ENCODE measurements at regions of chr1 and their contacts with region 1.

Region 1: GRCh38 chr1:235971571-235972310 is 93.1 kb downstream of the NID1 start:
- DNase-seq: peak; percentile 99 to 100 (median 99)
- H3K4me3 ChIP-seq: peak overlapping the region; percentile 35 to 72 (median 53)
- H3K4me3 Mint-ChIP-seq: peak overlapping the region; percentile 85 to 95
- H3K27ac ChIP-seq: peak overlapping the region; percentile 95 to 97
- H3K27ac Mint-ChIP-seq: peak overlapping the region; percentile 95 to 99 (median 98)
- H3K4me1 ChIP-seq: peaks cover 29 to 48% of the 10 kb centered on the region in 2 donors
- H3K4me1 Mint-ChIP-seq: peaks cover 35% of the 10 kb centered on the region
- H3K27me3 ChIP-seq: no peaks in the 10 kb centered on the region
- H3K27me3 Mint-ChIP-seq: peaks cover 0 to 3% (median 0%) of the 10 kb centered on the region in 3 donors
- CTCF ChIP-seq: peak; percentile 88

Region 2: DNA sequence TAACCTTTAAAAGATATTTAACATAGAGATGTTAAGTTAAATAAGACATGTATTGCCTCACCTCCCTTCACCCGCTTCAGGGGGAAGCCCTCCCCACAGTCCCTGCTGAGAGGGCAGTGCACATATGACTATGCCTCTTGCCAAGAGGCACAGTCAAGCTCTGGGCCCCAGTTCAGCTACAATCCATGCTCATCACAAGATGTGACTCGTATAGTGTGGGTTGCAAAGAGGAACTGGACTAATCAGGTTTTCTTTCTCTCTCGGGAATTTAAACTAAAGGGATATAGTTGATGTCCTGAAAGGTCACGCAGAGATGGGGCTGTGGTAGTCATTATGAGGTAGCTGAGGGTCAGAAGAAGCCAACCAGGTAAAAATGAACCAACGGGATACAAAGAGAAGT is 140.6 kb before region 1 on chr1:
- intact Hi-C with region 1: loop called (anchors 5 to 10 kb)
- DNase-seq: peak; percentile 70 to 89 (median 74)
- H3K4me3 ChIP-seq: no peak overlapping the region
- H3K4me3 Mint-ChIP-seq: no peak overlapping the region
- H3K27ac ChIP-seq: peak overlapping the region; percentile 9 to 71
- H3K27ac Mint-ChIP-seq: peak overlapping the region; percentile 73 to 97 (median 95)
- H3K4me1 ChIP-seq: peaks cover 17 to 18% of the 10 kb centered on the region in 2 donors
- H3K4me1 Mint-ChIP-seq: peaks cover 26% of the 10 kb centered on the region
- H3K27me3 ChIP-seq: no peaks in the 10 kb centered on the region
- H3K27me3 Mint-ChIP-seq: no peaks in the 10 kb centered on the region
- CTCF ChIP-seq: no peak

Region 3: DNA sequence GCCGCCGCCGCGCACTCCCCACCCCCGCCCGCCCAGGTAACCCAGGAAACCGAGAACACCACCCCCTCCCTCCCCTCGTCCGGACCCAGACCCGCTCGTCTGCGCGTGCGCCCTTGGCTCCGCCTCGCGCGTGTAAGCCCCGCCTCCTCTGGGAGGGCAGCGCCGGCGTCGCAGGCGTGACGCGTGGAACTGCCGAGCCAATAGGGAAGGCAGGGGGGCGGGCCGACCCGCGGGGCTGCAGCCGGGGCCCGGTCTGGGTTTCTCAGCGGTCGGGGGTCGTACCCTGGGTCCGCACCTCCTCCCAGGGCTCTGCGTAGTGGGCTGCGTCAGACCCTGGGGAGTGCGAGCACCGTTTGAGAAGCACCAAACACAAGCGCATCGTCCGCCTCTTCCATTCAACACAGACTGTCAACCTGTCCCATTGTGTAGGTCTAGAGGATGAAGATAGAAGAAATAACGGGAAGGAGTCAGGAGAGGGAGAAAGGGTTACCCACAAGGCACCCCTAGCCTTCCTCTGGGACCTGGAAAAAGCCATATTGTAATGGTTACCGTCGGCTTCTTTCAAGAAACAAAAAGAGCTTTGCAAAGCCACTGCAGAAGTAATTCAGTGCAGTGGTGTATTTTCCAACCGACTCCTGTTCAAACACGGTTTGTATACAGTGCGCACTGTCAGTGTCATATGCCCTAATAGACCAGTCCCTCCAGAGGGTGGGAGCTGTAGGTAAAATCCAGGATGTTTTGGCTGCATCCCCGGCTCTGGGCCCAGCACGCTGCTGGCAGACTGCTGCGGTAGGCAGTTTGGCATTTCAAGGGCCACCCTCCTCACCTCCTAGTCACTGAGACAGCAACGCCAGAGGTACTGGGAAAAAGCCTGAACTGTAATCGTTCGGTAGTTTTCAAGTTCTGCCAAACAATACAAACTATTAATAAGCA is 104.6 kb before region 1 on chr1:
- intact Hi-C with region 1: loop called (anchors 2 to 5 kb)
- DNase-seq: peak; percentile 87 to 96 (median 92)
- H3K4me3 ChIP-seq: peak overlapping the region; percentile 86 to 99 (median 93)
- H3K4me3 Mint-ChIP-seq: peak overlapping the region; percentile 83 to 85
- H3K27ac ChIP-seq: peak overlapping the region; percentile 97 to 98
- H3K27ac Mint-ChIP-seq: peak overlapping the region in 6 of 7 donors; percentile 94 to 98 (median 97)
- H3K4me1 ChIP-seq: peaks cover 41 to 46% of the 10 kb centered on the region in 2 donors
- H3K4me1 Mint-ChIP-seq: peaks cover 41% of the 10 kb centered on the region
- H3K27me3 ChIP-seq: no peaks in the 10 kb centered on the region
- H3K27me3 Mint-ChIP-seq: no peaks in the 10 kb centered on the region
- CTCF ChIP-seq: no peak

Region 4: GRCh38 chr1:235910357-235911299 is 61.1 kb before region 1 on chr1:
- intact Hi-C with region 1: loop called in 1 of 2 experiments (anchors 5 kb)
- DNase-seq: peak; percentile 56 to 84 (median 72)
- H3K4me3 ChIP-seq: no peak overlapping the region
- H3K4me3 Mint-ChIP-seq: no peak overlapping the region
- H3K27ac ChIP-seq: no peak overlapping the region
- H3K27ac Mint-ChIP-seq: peak overlapping the region in 2 of 7 donors; percentile 25 to 78
- H3K4me1 ChIP-seq: peaks cover 21 to 32% of the 10 kb centered on the region in 2 donors
- H3K4me1 Mint-ChIP-seq: peaks cover 41% of the 10 kb centered on the region
- H3K27me3 ChIP-seq: no peaks in the 10 kb centered on the region
- H3K27me3 Mint-ChIP-seq: peaks cover 0 to 3% (median 2%) of the 10 kb centered on the region in 3 donors
- CTCF ChIP-seq: no peak

Region 5: GRCh38 chr1:235946571-235946981 is 25.2 kb before region 1 on chr1:
- intact Hi-C with region 1: loop called in 1 of 2 experiments (anchors 2 kb)
- DNase-seq: no peak
- H3K4me3 ChIP-seq: peak overlapping the region in 1 of 3 experiments; percentile 60
- H3K4me3 Mint-ChIP-seq: peak overlapping the region; percentile 62 to 71
- H3K27ac ChIP-seq: peak overlapping the region; percentile 95 to 100
- H3K27ac Mint-ChIP-seq: peak overlapping the region; percentile 97 to 100 (median 99)
- H3K4me1 ChIP-seq: peaks cover 99 to 100% of the 10 kb centered on the region in 2 donors
- H3K4me1 Mint-ChIP-seq: peaks cover 96% of the 10 kb centered on the region
- H3K27me3 ChIP-seq: no peaks in the 10 kb centered on the region
- H3K27me3 Mint-ChIP-seq: peaks cover 0 to 2% (median 0%) of the 10 kb centered on the region in 3 donors
- CTCF ChIP-seq: peak; percentile 1

Region 6: DNA sequence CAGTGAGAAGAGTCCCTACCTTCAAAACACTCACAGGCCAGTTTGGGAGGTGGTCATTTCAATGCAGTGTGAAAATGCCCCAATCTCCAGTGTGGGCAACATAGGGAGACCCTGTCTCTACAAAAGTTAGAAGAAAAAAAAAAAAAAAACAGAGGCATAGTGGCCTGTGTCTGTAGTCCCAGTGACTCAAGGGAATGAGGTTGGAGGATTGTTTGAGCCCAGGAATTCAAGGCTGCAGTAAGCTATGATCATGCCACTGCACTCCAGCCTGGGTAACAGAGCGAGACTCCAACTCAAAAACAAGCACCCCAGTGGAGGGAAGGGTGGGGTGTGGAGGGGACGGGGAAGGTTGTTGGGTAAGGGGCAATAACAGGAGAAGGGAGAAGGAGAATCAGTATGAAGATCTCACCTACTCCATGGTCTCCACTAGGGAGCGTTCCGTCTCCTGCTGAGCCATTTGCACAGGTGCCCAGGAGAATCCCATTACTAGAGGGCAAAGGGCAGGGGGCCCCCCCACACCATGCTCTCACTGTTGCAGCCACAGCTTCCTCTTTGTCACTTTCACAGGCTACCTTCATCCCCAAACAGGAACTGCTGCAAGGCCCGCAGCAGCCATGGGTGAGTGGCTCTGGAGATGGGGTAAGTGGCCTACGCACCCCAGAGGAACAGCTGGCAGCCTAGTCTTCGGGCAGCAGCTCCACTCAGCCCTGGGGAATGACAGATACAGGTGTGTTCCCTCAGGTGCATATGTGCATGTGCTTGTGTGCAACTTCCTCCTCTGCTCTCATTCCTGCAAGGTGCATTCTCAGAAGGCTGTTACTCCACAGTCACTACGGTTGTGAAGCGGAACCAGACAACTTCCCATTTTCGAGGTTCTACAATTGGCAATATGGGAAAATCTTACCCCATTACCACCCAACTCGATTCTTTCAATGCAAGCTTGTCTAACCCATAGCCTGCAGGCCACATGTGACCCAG is 17.1 kb before region 1 on chr1:
- intact Hi-C with region 1: loop called in 1 of 2 experiments (anchors 2 kb)
- DNase-seq: peak; percentile 86 to 94 (median 94)
- H3K4me3 ChIP-seq: peak overlapping the region in 1 of 3 experiments; percentile 52
- H3K4me3 Mint-ChIP-seq: peak overlapping the region; percentile 9 to 53
- H3K27ac ChIP-seq: peak overlapping the region; percentile 79 to 100
- H3K27ac Mint-ChIP-seq: peak overlapping the region; percentile 95 to 100 (median 96)
- H3K4me1 ChIP-seq: peaks cover 97 to 100% of the 10 kb centered on the region in 2 donors
- H3K4me1 Mint-ChIP-seq: peaks cover 99% of the 10 kb centered on the region
- H3K27me3 ChIP-seq: no peaks in the 10 kb centered on the region
- H3K27me3 Mint-ChIP-seq: peaks cover 0 to 2% (median 0%) of the 10 kb centered on the region in 3 donors
- CTCF ChIP-seq: no peak